Right ventricle myocardium inferior (tissue), 1 donor: ENCODE measurements at regions of chr1 and their contacts with region 1.

Region 1: GRCh38 chr1:207797229-207797961 is 45.5 kb downstream of the CD46 start:
- DNase-seq: no peak
- ATAC-seq: peak; percentile 83

Region 2: GRCh38 chr1:207751790-207752455 is 45.5 kb before region 1 on chr1 and contains the start of gene CD46:
- intact Hi-C with region 1: loop called (anchors 5 kb)
- DNase-seq: peak; percentile 98
- ATAC-seq: peak; percentile 100
- total RNA-seq, gene CD46: 95.7 TPM